Activated CD4-positive, alpha-beta T cell treated with anti-CD3 and anti-CD28 coated beads for 36 hours (primary cell): ENCODE measurements at regions of chr20 and their contacts with region 1.

Region 1: GRCh38 chr20:31822421-31823330 is 3.5 kb downstream of the MYLK2 start:
- DNase-seq: peak; percentile 86
- ATAC-seq: peak; percentile 90
- H3K4me3 Mint-ChIP-seq: no peak overlapping the region
- H3K27ac Mint-ChIP-seq: no peak overlapping the region
- H3K4me1 Mint-ChIP-seq: peaks cover 4% of the 10 kb centered on the region
- H3K27me3 Mint-ChIP-seq: no peaks in the 10 kb centered on the region

Region 2: GRCh38 chr20:31835977-31836852 is 13.5 kb after region 1 on chr20:
- CTCF ChIA-PET with region 1: interaction called, 15 read pairs
- POLR2A ChIA-PET with region 1: no interaction called
- intact Hi-C with region 1: no loop called
- DNase-seq: peak; percentile 42
- ATAC-seq: peak; percentile 60
- H3K4me3 Mint-ChIP-seq: no peak overlapping the region
- H3K27ac Mint-ChIP-seq: no peak overlapping the region
- H3K4me1 Mint-ChIP-seq: peaks cover 5% of the 10 kb centered on the region
- H3K27me3 Mint-ChIP-seq: no peaks in the 10 kb centered on the region

Region 3: DNA sequence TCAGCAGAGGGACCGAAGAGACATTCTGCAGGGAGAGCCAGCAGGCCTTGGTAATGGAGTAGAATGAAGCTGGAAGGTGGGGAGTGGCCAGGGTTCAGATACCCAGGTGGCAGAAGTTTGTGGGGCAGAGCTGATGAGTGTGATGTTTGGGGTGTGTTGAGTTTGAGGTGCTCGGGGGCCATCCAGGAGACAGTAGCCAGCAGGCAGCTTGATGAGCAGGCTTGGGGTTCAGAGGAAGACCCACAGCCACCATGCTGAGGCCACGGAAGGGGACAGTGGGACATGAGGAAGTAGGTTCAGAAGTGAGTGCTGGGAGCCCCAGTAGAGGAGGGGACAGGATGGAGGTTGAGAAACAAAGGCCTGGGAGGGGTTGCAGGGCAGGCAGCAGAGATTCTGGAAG is 33.8 kb after region 1 on chr20:
- CTCF ChIA-PET with region 1: interaction called, 11 read pairs
- POLR2A ChIA-PET with region 1: no interaction called
- intact Hi-C with region 1: no loop called
- DNase-seq: no peak
- ATAC-seq: no peak
- H3K4me3 Mint-ChIP-seq: no peak overlapping the region
- H3K27ac Mint-ChIP-seq: no peak overlapping the region
- H3K4me1 Mint-ChIP-seq: peaks cover 5% of the 10 kb centered on the region
- H3K27me3 Mint-ChIP-seq: peaks cover 24% of the 10 kb centered on the region

Region 4: DNA sequence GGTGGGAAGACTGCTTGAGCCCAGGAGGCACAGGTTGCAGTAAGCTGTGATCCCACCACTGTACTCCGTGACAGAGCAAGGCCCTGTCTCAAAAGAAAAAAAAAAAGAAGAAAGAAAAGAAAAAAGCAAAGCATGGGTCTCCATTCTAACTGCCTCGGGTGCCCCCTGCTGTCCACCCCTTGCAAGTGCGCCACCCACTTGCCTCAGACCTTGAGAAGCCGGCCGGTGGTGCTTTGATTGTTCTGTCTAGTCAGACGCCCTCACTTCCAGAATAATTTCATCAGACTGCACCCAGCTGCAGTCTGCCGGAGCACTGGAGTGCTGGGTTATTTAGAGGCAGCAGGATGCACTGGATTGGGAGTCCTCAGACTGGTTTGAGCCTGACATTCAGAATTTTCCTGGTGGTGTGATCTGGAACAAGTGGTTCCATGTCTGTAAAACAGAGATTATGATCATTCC is 269.2 kb after region 1 on chr20:
- CTCF ChIA-PET with region 1: interaction called, 7 read pairs
- POLR2A ChIA-PET with region 1: no interaction called
- intact Hi-C with region 1: loop called (anchors 1 to 2 kb)
- DNase-seq: peak; percentile 92
- ATAC-seq: peak; percentile 96
- H3K4me3 Mint-ChIP-seq: no peak overlapping the region
- H3K27ac Mint-ChIP-seq: no peak overlapping the region
- H3K4me1 Mint-ChIP-seq: peaks cover 2% of the 10 kb centered on the region
- H3K27me3 Mint-ChIP-seq: peaks cover 14% of the 10 kb centered on the region